Activated naive CD4-positive, alpha-beta T cell treated with anti-CD3 and anti-CD28 coated beads, Interleukin-2, amount 10 ng/mL, durations not matched to agents 7 days and 5 days (primary cell): ENCODE measurements at regions of chr18 and their contacts with region 1.

Region 1: GRCh38 chr18:3454365-3455089 is 4.6 kb downstream of the TGIF1 start:
- DNase-seq: peak; percentile 54
- H3K4me3 Mint-ChIP-seq: peak overlapping the region; percentile 88
- H3K27ac Mint-ChIP-seq: peak overlapping the region; percentile 98
- H3K4me1 Mint-ChIP-seq: peaks cover 57% of the 10 kb centered on the region
- H3K27me3 Mint-ChIP-seq: peaks cover 9% of the 10 kb centered on the region

Region 2: DNA sequence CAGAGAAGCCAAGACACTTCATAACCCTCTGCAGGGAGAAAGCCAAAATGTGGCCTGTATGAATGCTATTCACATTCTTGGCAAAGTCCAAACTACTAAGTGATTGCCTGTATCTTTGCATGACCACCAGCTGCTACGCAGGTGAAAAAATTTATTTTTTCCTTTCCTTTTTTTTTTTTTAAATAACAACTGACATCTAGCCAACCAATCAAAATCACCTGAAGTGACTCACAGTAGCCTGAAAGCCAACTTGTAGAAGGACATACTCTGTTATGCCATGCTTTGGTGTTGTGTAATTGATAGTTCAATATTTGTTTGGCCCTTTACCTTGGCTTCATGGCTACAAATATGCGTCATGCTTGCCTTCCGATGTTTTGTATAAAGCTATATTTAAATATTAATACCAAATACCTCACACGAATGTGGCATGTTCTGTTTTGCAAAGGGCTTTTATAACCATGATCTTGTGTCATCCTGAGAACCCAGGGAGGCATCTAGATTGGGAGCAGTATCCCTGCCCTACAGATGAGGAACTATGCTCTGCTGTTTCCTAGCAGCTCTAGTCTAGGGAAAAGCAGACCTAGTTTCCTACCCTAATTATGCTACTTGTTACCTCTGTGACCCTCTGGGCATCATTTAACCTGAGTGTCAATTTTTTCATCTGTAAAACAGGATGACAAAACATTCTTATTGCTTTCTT is 336.9 kb before region 1 on chr18:
- CTCF ChIA-PET with region 1: no interaction called
- DNase-seq: no peak
- H3K4me3 Mint-ChIP-seq: no peak overlapping the region
- H3K27ac Mint-ChIP-seq: no peak overlapping the region
- H3K4me1 Mint-ChIP-seq: no peaks in the 10 kb centered on the region
- H3K27me3 Mint-ChIP-seq: peaks cover 4% of the 10 kb centered on the region

Region 3: GRCh38 chr18:3281456-3282400 is 172.8 kb before region 1 on chr18:
- CTCF ChIA-PET with region 1: interaction called, 10 read pairs
- DNase-seq: no peak
- H3K4me3 Mint-ChIP-seq: no peak overlapping the region
- H3K27ac Mint-ChIP-seq: no peak overlapping the region
- H3K4me1 Mint-ChIP-seq: no peaks in the 10 kb centered on the region
- H3K27me3 Mint-ChIP-seq: peaks cover 6% of the 10 kb centered on the region

Region 4: DNA sequence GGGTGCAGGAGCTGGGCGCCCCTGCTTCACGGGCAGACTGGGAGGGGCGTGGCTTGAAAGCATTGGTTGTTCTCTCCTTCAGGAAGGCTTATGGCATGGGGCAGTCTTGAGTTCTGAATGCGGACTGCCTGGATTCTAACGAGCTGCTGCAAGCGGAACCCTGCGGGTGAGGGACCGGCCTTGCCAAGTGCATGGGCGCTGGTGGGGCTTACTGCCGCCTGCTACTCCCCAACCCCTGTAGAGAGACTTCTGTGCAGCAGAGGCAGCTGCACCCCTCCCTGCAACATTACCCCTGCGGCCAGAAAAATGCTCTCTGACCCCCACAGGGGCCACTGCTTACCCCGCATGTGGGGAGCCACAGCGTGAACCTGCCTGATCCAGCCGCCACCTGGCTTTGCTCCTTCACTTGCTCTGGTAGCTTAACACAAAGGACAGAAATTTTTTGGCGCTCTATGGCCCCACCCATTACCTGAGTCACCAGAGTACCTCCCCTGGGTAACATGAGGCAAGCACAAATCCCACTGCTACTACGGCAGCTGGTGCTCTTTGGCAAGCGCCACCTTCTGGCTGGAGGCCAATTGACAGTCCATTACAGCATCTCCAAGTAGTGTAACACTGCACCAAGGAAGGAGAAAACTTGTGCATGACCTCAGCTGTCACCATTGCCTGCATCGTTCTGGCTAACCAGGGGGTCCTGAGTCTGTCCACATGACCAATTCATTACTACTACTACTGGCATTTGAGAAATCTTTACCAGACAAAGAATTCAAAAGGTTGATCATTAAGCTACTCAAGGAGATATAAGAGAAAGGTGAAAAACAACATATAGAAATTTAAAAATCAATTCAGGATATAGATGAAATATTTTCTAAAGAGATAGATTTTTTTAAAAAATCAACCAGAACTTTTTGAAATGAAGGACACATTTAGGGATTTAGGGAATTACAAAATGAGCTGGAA is 157.2 kb before region 1 on chr18:
- CTCF ChIA-PET with region 1: interaction called, 15 read pairs
- DNase-seq: peak; percentile 97
- H3K4me3 Mint-ChIP-seq: peak overlapping the region; percentile 93
- H3K27ac Mint-ChIP-seq: peak overlapping the region; percentile 81
- H3K4me1 Mint-ChIP-seq: peaks cover 11% of the 10 kb centered on the region
- H3K27me3 Mint-ChIP-seq: peaks cover 21% of the 10 kb centered on the region

Region 5: DNA sequence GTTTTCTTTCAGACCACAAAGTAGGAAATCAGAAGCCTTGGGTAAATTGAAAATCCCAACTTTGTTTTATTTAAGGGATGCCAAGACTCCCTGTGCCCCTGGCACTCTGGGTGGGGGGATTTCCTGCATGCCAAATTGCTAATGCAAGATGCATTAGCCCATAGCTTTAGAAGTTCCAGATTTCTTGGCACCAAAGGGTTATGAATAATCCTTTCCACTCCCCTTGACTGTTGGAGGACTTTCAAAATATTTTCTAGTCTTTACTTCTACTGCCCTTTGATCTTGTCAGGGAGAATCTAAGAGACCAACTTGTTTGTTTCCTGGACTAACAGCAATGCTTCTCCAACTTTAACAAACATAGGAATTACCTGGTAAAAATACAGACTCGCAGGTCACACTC is 86.3 kb before region 1 on chr18:
- CTCF ChIA-PET with region 1: no interaction called
- DNase-seq: no peak
- H3K4me3 Mint-ChIP-seq: no peak overlapping the region
- H3K27ac Mint-ChIP-seq: no peak overlapping the region
- H3K4me1 Mint-ChIP-seq: no peaks in the 10 kb centered on the region
- H3K27me3 Mint-ChIP-seq: peaks cover 8% of the 10 kb centered on the region

Region 6: DNA sequence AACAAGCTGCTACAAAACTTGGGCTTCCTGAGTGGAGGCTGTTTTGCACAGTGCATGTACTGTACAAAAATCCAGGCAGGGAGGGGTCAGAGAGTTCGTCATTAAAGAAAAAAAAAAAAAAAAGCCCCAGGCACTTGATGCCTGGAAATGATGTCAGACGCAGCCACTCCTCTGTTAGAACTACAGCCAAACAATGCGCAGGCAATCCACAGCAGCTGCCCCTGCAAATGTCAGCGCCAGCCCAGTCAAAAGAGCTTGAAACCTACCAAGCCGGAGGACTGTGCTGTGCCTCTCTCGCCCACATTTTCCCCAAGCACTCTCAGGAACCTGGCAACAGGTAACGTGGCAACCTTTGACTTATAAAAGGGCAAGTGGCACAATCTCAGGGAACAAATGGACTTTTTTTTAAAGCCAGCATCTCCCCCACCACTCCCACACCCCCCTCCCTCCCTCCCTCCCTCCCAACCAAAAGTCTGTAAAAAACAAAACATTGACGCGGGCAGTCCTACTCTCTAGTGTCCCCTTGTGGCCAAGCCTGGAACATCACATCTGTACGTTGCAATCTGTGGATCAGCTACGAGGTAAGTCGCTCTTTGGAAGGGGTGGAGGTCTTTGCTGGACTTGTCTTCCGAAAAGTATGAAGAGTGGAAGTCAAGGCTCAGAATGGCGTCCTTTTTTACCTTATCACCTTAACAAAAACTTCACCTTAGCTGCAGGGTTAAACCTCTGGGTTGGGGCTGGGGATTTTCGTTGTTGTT is 139.6 kb after region 1 on chr18:
- CTCF ChIA-PET with region 1: interaction called, 69 read pairs
- DNase-seq: peak; percentile 92
- H3K4me3 Mint-ChIP-seq: peak overlapping the region; percentile 84
- H3K27ac Mint-ChIP-seq: peak overlapping the region; percentile 99
- H3K4me1 Mint-ChIP-seq: peaks cover 60% of the 10 kb centered on the region
- H3K27me3 Mint-ChIP-seq: no peaks in the 10 kb centered on the region

Region 7: GRCh38 chr18:3604498-3605408 is 150.2 kb after region 1 on chr18:
- CTCF ChIA-PET with region 1: interaction called, 12 read pairs
- DNase-seq: peak; percentile 49
- H3K4me3 Mint-ChIP-seq: no peak overlapping the region
- H3K27ac Mint-ChIP-seq: no peak overlapping the region
- H3K4me1 Mint-ChIP-seq: peaks cover 11% of the 10 kb centered on the region
- H3K27me3 Mint-ChIP-seq: no peaks in the 10 kb centered on the region